Spleen (tissue), 13 donors: ENCODE measurements at regions of chr17 and their contacts with region 1.

Region 1: DNA sequence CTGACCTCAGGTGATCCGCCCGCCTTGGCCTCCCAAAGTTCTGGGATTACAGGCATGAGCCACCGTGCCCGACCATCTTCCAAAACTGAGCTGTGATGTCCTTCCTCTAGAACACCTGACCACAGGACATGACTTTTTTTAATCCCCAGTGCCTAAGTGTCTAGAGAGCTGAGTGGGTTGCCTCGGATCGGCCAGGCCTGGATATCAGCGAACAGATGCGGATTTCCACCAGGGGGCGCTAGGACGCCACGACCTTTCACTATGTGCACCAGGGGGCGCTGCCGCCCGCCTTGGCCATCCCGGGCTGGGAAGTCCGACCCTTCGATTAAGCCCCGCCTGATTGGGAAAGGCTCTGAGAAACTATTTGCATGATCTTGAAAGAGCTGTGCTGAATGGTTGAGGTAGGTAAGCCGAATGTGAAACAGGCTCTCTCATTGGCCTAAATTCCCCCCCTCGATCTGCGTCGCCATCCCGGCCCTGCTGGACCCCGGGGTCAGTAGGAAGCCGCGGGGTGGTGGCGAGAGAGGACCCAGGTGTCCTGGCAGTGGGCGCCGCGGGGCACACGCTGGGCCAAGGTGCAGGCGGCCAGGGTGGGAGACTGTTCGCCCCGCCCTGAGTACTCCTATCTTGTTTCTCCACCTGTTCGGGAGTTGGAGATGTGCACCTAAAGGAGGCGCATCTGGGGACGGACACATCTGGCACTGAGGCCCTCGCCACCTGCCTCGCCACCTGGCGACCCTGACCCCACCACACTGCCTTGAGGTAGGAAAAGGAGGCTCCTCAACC is at the start of gene ACBD4:
- DNase-seq: peak; percentile 99
- H3K4me3 ChIP-seq: peak within 1 kb of the TSS; percentile 66 to 89 (median 71)
- H3K27ac ChIP-seq: peak within 1 kb of the TSS; percentile 66 to 90 (median 86)
- H3K4me1 ChIP-seq: peaks cover 14 to 55% (median 33%) of the 10 kb centered on the region in 6 donors
- H3K27me3 ChIP-seq: no peaks in the 10 kb centered on the region
- CTCF ChIP-seq: peak; percentile 99 to 100 (median 100)
- POLR2A ChIP-seq: peak in 1 of 3 donors; percentile 36
- total RNA-seq, gene ACBD4: 14.1 to 24.6 (median 20.2) TPM

Region 2: DNA sequence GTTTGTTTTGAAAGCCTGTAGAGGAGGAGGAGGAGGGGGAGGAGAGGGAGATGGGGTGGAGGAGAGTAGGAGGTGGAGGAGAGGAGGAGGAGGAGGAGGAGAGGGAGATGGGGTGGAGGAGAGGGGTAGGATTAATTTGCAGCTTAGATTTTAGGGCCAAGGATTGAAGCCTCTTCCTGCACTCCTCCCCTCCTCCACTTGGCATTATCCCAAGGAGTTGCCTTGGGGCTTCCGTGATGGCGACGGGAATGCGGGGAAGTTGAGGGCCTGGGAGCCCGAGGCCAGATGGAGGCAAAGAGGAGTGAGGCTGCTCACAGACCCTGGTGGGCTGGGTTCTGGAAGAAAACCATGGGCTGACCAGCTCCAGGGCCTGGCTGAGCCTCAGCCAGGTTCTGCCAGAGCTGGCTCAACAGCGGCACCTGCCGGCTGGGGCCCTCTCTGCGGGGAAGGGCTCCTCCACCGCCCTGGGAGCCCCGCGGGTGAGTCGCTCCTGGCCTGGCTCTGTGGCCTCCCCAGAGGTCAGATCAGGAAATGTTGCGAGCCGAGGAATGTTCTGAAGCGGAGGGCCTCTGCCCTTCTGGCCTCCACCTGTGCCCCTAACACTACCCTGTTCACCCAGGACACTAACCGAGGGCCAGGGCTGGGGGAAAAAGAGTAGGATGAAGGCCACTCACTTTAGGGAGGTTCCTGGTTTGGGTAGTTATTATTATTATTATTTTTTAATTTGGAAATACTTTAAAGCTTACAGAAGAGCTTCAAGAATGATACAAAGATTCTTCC is 62.4 kb after region 1 on chr17:
- intact Hi-C with region 1: loop called (anchors 2 kb)
- DNase-seq: peak; percentile 99
- H3K4me3 ChIP-seq: no peak overlapping the region
- H3K27ac ChIP-seq: peak overlapping the region in 5 of 8 donors; percentile 15 to 55 (median 48)
- H3K4me1 ChIP-seq: peaks cover 0 to 38% (median 14%) of the 10 kb centered on the region in 6 donors
- H3K27me3 ChIP-seq: no peaks in the 10 kb centered on the region
- CTCF ChIP-seq: peak; percentile 95 to 99 (median 99)
- POLR2A ChIP-seq: no peak

Region 3: DNA sequence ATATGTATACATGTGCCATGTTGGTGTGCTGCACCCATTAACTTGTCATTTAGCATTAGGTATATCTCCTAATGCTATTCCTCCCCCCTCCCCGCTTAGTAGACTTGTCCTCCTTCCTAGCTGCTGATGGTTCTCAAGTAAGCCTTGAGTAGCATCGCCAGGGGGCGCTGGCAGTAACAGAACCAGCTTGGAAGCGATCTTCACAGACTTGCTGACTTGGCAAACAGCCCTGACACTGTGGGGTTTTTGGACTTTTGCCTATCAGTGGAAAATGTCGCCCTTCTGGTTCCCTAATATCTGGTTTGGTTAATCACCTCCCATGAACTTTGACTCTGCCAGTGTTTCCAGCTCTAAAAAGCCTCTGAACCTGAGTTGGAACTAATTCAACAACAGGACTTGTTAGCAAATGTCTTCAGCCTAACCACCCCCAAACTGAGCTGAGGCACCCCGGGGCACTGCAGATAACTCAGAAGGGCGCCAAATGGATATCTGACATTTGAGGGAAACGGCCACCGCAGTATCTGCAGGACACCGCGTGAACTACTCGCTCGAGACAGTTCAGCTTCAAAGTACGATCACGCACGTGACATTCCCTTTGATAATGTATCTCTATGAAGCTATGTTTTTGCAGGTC is 141.9 kb after region 1 on chr17:
- intact Hi-C with region 1: no loop called
- DNase-seq: peak; percentile 97
- H3K4me3 ChIP-seq: no peak overlapping the region
- H3K27ac ChIP-seq: peak overlapping the region in 4 of 8 donors; percentile 8 to 49 (median 24)
- H3K4me1 ChIP-seq: peaks cover 6 to 20% (median 13%) of the 10 kb centered on the region in 6 donors
- H3K27me3 ChIP-seq: no peaks in the 10 kb centered on the region
- CTCF ChIP-seq: peak; percentile 80 to 94 (median 86)
- POLR2A ChIP-seq: no peak